Psoas muscle (tissue), 8 donors: ENCODE measurements at regions of chr12 and their contacts with region 1.

Region 1: DNA sequence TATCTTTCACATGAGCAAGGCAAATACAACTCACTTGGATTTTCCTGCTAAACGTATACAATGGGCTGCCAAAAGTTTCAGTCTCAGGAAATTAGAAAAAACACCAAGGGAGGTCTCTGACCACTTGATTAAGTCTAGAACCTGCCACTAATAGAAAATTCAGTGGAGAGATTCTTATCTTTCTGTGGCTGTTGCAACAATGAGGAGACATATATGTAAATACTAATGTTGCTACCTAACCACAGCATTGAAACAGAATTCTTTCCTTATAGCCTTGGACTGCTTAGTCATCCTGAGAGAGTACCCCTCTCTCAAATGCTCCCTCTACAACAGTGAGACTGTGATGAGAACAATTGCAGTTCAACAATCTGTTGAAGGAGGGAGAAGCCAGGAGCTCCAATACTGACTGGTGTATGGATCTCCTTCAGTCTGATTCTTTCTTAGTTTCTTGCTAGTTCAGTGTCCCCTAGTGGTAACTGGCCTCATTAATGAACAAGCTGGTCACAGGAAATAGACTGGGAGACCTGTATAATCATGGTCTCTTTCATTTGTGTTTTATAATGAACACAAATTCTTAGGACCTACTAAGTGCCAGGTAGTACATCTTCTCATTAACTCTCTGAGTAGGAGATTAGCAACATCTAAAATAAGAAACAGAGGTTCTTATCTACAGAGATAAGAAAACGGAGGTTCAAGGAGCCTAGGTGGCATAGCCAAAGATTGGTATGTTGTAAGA is 164.5 kb downstream of the SLC38A4 start:
- DNase-seq: no peak
- ATAC-seq: peak; percentile 66 to 78 (median 76)
- H3K4me3 ChIP-seq: peak overlapping the region; percentile 9
- H3K27ac ChIP-seq: peak overlapping the region; percentile 80
- H3K4me1 ChIP-seq: peaks cover 71% of the 10 kb centered on the region
- H3K27me3 ChIP-seq: no peaks in the 10 kb centered on the region
- CTCF ChIP-seq: peak; percentile 77

Region 2: GRCh38 chr12:46268590-46269558 is 392.4 kb before region 1 on chr12 and contains the start of gene SLC38A1:
- intact Hi-C with region 1: loop called in 1 of 2 experiments (anchors 5 kb)
- DNase-seq: peak; percentile 83 to 90
- ATAC-seq: peak; percentile 84 to 89 (median 86)
- H3K4me3 ChIP-seq: peak within 1 kb of the TSS; percentile 75
- H3K27ac ChIP-seq: peak within 1 kb of the TSS; percentile 78
- H3K4me1 ChIP-seq: peaks cover 8% of the 10 kb centered on the region
- H3K27me3 ChIP-seq: peaks cover 0 to 10% (median 0%) of the 10 kb centered on the region in 3 donors
- CTCF ChIP-seq: no peak
- total RNA-seq, gene SLC38A1: 17.3 to 58.8 (median 31.3) TPM

Region 3: GRCh38 chr12:46372544-46373110 is 288.7 kb before region 1 on chr12 and contains the start of gene SLC38A2:
- intact Hi-C with region 1: loop called (anchors 2 to 10 kb)
- DNase-seq: peak; percentile 97 to 99
- ATAC-seq: peak; percentile 88 to 93 (median 90)
- H3K4me3 ChIP-seq: peak within 1 kb of the TSS; percentile 94
- H3K27ac ChIP-seq: peak within 1 kb of the TSS; percentile 99
- H3K4me1 ChIP-seq: peaks cover 40% of the 10 kb centered on the region
- H3K27me3 ChIP-seq: no peaks in the 10 kb centered on the region
- CTCF ChIP-seq: no peak
- total RNA-seq, gene SLC38A2: 287 to 428 (median 331) TPM

Region 4: GRCh38 chr12:46459861-46460545 is 201.3 kb before region 1 on chr12:
- intact Hi-C with region 1: loop called in 1 of 2 experiments (anchors 5 kb)
- DNase-seq: no peak
- ATAC-seq: no peak
- H3K4me3 ChIP-seq: no peak overlapping the region
- H3K27ac ChIP-seq: peak overlapping the region; percentile 37
- H3K4me1 ChIP-seq: peaks cover 65% of the 10 kb centered on the region
- H3K27me3 ChIP-seq: no peaks in the 10 kb centered on the region
- CTCF ChIP-seq: no peak

Region 5: DNA sequence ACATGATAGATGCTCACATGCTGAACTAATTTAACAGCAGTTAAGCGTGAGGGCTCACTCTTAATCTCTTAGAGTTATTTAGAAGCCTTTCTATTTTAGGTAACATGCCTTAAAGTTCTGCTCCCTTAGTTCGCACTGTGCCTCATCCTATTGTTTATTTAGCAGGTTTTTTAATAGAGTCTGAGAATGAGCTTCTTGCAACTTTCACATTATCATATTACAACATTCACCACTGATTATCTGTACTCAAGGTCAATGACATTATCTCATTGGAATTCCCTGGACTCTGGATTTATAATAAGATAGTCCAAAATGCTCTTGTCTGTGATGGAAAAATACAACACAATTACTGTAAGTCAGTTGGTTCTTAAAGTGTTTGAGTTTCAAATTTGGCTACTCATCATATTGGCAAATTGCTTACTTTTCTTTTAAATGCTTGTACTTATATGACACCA is 105.1 kb before region 1 on chr12:
- intact Hi-C with region 1: loop called (anchors 5 kb)
- DNase-seq: no peak
- ATAC-seq: peak; percentile 63 to 88 (median 80)
- H3K4me3 ChIP-seq: no peak overlapping the region
- H3K27ac ChIP-seq: peak overlapping the region; percentile 77
- H3K4me1 ChIP-seq: peaks cover 52% of the 10 kb centered on the region
- H3K27me3 ChIP-seq: no peaks in the 10 kb centered on the region
- CTCF ChIP-seq: no peak

Region 6: DNA sequence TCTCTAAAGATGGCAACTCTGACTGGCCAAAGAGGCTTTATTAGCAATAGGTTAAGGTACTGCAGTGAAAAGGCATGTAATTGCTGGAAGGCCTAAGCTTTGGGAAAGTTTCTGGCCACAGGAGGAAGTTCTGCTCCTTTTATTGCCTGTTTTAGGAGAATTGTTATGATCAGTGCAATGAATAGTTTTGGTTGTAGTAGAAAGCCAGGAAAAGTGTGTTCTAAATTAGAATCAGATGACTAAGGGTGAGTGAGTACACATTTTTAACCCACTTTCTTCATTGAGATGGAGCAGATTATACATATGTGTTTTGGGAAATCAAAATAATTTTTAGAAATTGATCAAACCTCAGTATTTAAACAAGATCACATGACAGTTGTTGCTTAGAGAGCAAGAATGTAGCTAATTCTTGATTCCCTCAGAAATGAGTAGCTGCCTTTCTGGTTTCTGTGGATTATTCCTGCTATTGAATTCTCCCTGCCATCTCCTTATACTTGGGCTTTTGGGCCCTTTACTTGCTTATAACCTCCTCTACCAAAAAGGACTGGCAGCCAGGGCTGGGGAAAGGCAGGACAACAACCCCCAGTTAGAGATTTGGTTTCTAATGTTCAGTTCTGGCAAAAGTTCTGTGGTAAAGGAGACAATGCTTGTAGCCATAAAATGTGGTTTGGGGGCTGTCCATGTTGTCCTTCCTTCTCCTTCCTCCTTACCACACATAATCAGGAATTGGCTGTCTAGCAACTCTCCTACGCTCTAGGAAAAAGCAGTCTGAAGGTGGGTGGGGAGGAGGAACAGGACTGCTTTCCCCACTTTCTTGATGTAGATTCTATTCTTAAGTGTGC is 52.6 kb before region 1 on chr12:
- intact Hi-C with region 1: no loop called
- DNase-seq: no peak
- ATAC-seq: peak in 3 of 4 donors; percentile 28 to 69 (median 55)
- H3K4me3 ChIP-seq: no peak overlapping the region
- H3K27ac ChIP-seq: peak overlapping the region; percentile 19
- H3K4me1 ChIP-seq: peaks cover 14% of the 10 kb centered on the region
- H3K27me3 ChIP-seq: no peaks in the 10 kb centered on the region
- CTCF ChIP-seq: no peak